ENCODE measurements at regions of chr14 and their contacts with region 1.

Region 1: GRCh38 chr14:22973217-22974032 is 8.9 kb downstream of the AJUBA start:
- DNase-seq: peak; percentile 72
- H3K4me3 ChIP-seq: no peak overlapping the region
- H3K27ac ChIP-seq: no peak overlapping the region
- H3K4me1 ChIP-seq: peaks cover 31% of the 10 kb centered on the region
- H3K27me3 ChIP-seq: no peaks in the 10 kb centered on the region
- CTCF ChIP-seq: peak; percentile 53 to 54
- POLR2A ChIP-seq: no peak

Region 2: GRCh38 chr14:22791301-22791700 is 182.1 kb before region 1 on chr14:
- CTCF ChIA-PET with region 1: no interaction called
- POLR2A ChIA-PET with region 1: no interaction called
- dilution Hi-C with region 1: no loop called
- intact Hi-C with region 1: no loop called
- DNase-seq: no peak
- H3K4me3 ChIP-seq: no peak overlapping the region
- H3K27ac ChIP-seq: no peak overlapping the region
- H3K4me1 ChIP-seq: no peaks in the 10 kb centered on the region
- H3K27me3 ChIP-seq: peaks cover 0 to 4% of the 10 kb centered on the region in 2 experiments
- CTCF ChIP-seq: no peak
- POLR2A ChIP-seq: no peak

Region 3: GRCh38 chr14:22886500-22887259 is 86.7 kb before region 1 on chr14:
- CTCF ChIA-PET with region 1: no interaction called
- POLR2A ChIA-PET with region 1: interaction called, 10 read pairs
- dilution Hi-C with region 1: no loop called
- intact Hi-C with region 1: no loop called
- DNase-seq: peak; percentile 24
- H3K4me3 ChIP-seq: peak overlapping the region in 2 of 3 experiments; percentile 26 to 32
- H3K27ac ChIP-seq: no peak overlapping the region
- H3K4me1 ChIP-seq: no peaks in the 10 kb centered on the region
- H3K27me3 ChIP-seq: no peaks in the 10 kb centered on the region
- CTCF ChIP-seq: peak; percentile 6 to 37
- POLR2A ChIP-seq: no peak

Region 4: GRCh38 chr14:22955702-22956569 is 17.5 kb before region 1 on chr14:
- CTCF ChIA-PET with region 1: interaction called, 5 read pairs
- POLR2A ChIA-PET with region 1: interaction called, 3 read pairs
- dilution Hi-C with region 1: no loop called
- intact Hi-C with region 1: loop called (anchors 2 kb)
- DNase-seq: peak; percentile 53
- H3K4me3 ChIP-seq: peak overlapping the region; percentile 52 to 96 (median 94)
- H3K27ac ChIP-seq: peak overlapping the region; percentile 82
- H3K4me1 ChIP-seq: peaks cover 10% of the 10 kb centered on the region
- H3K27me3 ChIP-seq: no peaks in the 10 kb centered on the region
- CTCF ChIP-seq: no peak
- POLR2A ChIP-seq: no peak

Measured in endothelial cell of umbilical vein (primary cell).